Activated T-helper 2 cell treated with anti-CD3 and anti-CD28 coated beads, Interferon-gamma antibody, Interleukin-2, Interleukin-4, amounts not matched to agents 10 μg/mL and 5 μg/mL and 100 μg/mL, durations not matched to agents 14 hours and 24 hours and 36 hours (primary cell): ENCODE measurements at regions of chr19 and their contacts with region 1.

Region 1: GRCh38 chr19:2944775-2945574 is at the start of gene ZNF77:
- DNase-seq: peak; percentile 97
- H3K4me3 Mint-ChIP-seq: peak within 1 kb of the TSS; percentile 94
- H3K27ac Mint-ChIP-seq: peak within 1 kb of the TSS; percentile 96
- H3K4me1 Mint-ChIP-seq: peaks cover 20% of the 10 kb centered on the region
- H3K27me3 Mint-ChIP-seq: no peaks in the 10 kb centered on the region
- total RNA-seq, gene ZNF77: 3.5 and 4.0 TPM in 2 replicates

Region 2: GRCh38 chr19:2820112-2820702 is 124.8 kb before region 1 on chr19:
- intact Hi-C with region 1: no loop called
- DNase-seq: no peak
- H3K4me3 Mint-ChIP-seq: peak overlapping the region; percentile 79
- H3K27ac Mint-ChIP-seq: no peak overlapping the region
- H3K4me1 Mint-ChIP-seq: no peaks in the 10 kb centered on the region
- H3K27me3 Mint-ChIP-seq: no peaks in the 10 kb centered on the region

Region 3: GRCh38 chr19:2900296-2901252 is 44.4 kb before region 1 on chr19 and contains the start of gene ZNF57:
- intact Hi-C with region 1: loop called (anchors 1 kb)
- DNase-seq: peak; percentile 94
- H3K4me3 Mint-ChIP-seq: peak within 1 kb of the TSS; percentile 97
- H3K27ac Mint-ChIP-seq: peak within 1 kb of the TSS; percentile 93
- H3K4me1 Mint-ChIP-seq: peaks cover 8% of the 10 kb centered on the region
- H3K27me3 Mint-ChIP-seq: no peaks in the 10 kb centered on the region
- total RNA-seq, gene ZNF57: 2.7 and 3.1 TPM in 2 replicates